Cardiac septum (tissue), 1 donor: ENCODE measurements at regions of chr6 and their contacts with region 1.

Region 1: DNA sequence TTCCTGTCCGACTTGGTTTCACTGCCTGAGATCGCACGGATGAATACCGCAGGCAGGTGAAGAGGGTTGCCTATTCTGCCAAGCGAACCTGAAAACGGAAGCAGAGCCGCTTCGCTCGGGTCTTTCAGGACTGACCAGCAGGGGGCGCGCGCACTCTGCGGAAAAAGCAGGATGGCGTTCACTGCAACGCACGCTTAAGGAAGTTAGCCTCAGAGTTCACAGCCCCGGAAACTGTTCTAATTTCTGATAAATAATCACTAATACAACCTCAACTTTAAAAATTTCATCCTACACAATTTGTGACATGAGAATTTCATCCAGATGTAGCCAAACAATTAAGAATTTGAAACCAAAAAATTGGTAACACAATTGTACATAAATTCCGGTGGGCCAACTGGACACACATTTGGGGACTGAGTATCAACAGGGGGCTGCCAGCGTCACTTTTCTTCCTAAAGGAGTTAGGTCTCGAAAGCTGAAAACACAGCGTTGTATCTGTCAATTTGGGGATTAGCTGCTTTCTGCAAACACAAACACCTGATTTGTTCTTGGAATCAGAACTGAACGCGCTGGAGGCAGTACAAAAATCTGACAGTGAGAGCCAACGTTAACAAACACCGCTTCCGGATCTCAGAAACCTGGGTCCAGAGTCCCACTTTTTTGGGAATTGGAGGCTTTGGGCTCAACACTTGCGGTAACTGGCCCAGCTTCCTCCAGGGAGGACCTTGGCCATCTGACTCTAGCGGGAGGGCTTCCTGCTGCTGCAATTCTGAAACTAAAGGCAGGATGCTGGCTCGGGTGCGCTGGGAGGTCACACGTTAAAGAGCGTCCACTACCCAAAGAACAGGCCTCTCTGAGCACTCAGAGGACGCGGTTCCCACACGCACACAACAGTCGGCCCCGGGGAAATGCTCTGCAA is 8.8 kb downstream of the PXDC1 start:
- DNase-seq: peak; percentile 95

Region 2: GRCh38 chr6:3929281-3929798 is 186.7 kb after region 1 on chr6:
- intact Hi-C with region 1: loop called (anchors 2 kb)
- DNase-seq: no peak

Region 3: DNA sequence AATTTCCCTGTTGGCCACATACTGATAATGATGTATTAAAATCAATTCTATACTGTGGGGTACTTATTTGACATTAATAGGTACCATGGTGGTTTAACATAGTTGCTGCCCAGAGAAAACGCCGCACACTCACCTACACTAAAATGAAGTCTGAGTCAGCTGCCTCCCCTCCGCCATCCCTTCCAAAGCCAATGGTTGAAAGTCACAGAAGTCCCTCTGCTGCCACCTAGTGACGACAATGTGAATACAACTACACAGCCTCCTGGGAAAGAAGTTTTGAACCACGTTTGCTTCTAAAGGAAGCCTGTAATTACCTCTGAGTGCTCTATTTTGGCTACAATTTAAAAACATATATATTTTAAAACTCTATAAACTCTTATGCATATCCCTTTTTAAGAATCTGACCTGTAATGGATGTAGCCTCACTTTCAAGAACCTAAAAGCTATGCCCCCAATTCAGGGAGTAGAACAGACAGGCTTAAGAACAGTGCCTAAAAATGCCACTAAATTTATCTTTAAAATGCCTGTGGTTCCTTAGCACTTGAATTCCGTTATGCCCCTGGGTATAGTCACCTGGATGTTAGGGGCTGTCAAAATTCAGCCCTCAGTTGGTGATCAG is 413.3 kb after region 1 on chr6:
- intact Hi-C with region 1: loop called (anchors 10 kb)
- DNase-seq: no peak